B cell (primary cell): ENCODE measurements at regions of chr3 and their contacts with region 1.

Region 1: DNA sequence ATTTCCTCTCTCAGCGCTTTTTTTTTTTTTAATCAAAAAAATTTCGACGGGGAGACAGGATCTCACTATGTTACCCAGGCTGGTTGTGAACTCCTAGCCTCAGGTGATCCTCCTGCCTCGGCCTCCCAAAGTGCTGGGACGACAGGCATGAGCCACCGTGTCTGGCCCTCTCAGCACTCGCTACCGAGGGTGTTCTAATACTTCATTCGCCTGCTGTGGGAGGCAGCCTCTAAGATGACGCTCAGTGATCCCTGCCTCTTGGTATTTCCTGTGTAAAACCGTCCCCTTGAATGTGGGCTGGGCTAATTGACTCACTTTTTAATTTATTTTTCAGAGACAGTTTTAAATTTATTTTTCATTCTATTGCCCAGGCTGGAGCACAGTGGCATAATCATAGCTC is 62.8 kb upstream of the TFRC start:
- DNase-seq: no peak
- ATAC-seq: no peak
- H3K4me3 ChIP-seq: no peak overlapping the region
- H3K4me3 Mint-ChIP-seq: no peak overlapping the region
- H3K27ac ChIP-seq: no peak overlapping the region
- H3K27ac Mint-ChIP-seq: no peak overlapping the region
- H3K4me1 ChIP-seq: peaks cover 18 to 38% of the 10 kb centered on the region in 2 donors
- H3K4me1 Mint-ChIP-seq: peaks cover 28% of the 10 kb centered on the region
- H3K27me3 ChIP-seq: no peaks in the 10 kb centered on the region
- H3K27me3 Mint-ChIP-seq: no peaks in the 10 kb centered on the region
- CTCF ChIP-seq: no peak

Region 2: DNA sequence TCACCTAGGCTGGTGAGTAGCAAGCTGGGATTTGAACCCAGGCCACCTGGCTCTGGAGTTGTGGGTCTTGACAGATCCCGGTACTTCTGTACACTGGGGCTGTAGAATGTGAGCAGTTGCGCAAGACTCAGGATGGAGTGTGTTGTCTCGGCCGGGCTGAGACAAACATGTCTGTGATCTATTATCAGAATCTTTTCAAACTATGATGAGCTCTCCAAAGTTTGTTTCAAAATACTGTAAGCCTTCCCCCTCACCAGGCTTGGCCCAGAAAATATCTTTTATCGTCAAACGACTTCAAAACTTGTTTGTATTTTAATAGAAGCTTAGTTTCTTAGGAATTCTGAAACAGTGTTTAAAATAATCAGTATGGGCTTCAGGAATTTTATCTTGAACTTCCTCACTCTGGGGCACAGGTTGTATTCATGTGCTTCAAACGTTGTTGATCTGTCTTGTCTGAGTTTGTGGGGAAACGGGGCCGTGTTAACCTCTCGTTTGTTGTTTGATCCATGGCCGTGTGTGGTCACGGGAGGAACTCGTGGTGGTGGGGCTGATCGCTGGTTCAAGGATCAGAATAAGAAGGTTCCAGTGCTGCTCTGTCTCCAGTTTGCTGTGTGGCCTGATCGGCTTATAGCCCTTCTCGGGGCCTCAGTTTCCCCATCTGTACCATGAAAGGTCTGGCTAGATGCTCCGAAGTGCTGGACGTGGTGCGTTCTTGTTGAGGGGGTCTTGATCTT is 22.5 kb before region 1 on chr3:
- CTCF ChIA-PET with region 1: interaction called, 8 read pairs
- POLR2A ChIA-PET with region 1: no interaction called
- intact Hi-C with region 1: loop called (anchors 1 kb)
- DNase-seq: no peak
- ATAC-seq: no peak
- H3K4me3 ChIP-seq: no peak overlapping the region
- H3K4me3 Mint-ChIP-seq: no peak overlapping the region
- H3K27ac ChIP-seq: no peak overlapping the region
- H3K27ac Mint-ChIP-seq: no peak overlapping the region
- H3K4me1 ChIP-seq: peaks cover 39 to 49% of the 10 kb centered on the region in 2 donors
- H3K4me1 Mint-ChIP-seq: peaks cover 49% of the 10 kb centered on the region
- H3K27me3 ChIP-seq: no peaks in the 10 kb centered on the region
- H3K27me3 Mint-ChIP-seq: no peaks in the 10 kb centered on the region
- CTCF ChIP-seq: no peak